Right cardiac atrium (tissue), 5 donors: ENCODE measurements at regions of chr19 and their contacts with region 1.

Region 1: DNA sequence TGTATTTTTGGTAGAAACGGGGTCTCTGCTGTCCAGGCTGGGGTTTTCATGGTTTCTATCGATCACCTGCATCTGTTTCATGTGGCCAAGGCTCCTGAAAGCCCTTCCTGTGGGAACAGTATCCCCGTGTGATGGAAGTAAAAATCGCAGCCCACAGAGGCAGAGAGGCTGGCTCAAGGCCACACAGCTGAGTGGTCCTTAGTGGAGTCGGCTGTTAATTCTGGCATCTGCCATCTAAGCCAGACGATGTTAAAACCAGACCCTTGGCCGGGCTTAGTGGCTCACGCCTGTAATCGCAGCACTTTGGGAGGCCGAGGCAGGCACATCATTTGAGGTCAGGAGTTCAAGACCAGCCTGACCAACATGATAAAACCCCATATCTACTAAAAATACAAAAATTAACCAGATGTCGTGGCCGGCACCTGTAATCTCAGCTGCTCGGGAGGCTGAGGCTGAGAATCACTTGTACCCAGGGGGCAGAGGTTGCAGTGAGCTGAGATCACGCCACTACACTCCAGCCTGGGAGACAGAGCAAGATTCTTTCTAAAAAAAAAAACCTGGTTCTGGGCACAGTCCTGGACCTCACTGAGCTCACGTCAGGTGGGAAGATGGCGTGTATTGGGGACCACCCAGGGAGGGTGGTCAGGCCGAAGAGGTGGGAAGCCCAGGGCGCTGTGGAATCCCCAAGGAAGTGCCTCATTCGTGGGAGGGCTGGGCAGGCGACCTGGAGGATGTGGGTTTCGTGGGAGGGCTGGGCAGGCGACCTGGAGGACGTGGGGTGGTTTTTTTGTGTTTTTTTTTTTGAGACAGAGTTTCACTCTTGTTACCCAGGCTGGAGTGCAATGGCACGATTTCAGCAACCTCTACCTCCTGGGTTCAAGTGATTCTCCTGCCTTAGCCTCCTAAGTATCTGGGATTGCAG is 18.5 kb upstream of the MISP start:
- DNase-seq: no peak
- ATAC-seq: no peak
- H3K4me3 ChIP-seq: no peak overlapping the region
- H3K27ac ChIP-seq: no peak overlapping the region
- H3K4me1 ChIP-seq: no peaks in the 10 kb centered on the region
- H3K27me3 ChIP-seq: no peaks in the 10 kb centered on the region

Region 2: GRCh38 chr19:662962-663681 is 69.3 kb before region 1 on chr19 and contains the start of gene RNF126:
- intact Hi-C with region 1: loop called (anchors 2 to 5 kb)
- DNase-seq: peak; percentile 92 to 98 (median 97)
- ATAC-seq: peak; percentile 77 to 85
- H3K4me3 ChIP-seq: peak within 1 kb of the TSS; percentile 94
- H3K27ac ChIP-seq: peak within 1 kb of the TSS; percentile 96
- H3K4me1 ChIP-seq: peaks cover 9% of the 10 kb centered on the region
- H3K27me3 ChIP-seq: no peaks in the 10 kb centered on the region
- total RNA-seq, gene RNF126: 21.7 to 37.6 (median 28.0) TPM